IMR-90 (cell line): ENCODE measurements at regions of chr11 and their contacts with region 1.

Region 1: DNA sequence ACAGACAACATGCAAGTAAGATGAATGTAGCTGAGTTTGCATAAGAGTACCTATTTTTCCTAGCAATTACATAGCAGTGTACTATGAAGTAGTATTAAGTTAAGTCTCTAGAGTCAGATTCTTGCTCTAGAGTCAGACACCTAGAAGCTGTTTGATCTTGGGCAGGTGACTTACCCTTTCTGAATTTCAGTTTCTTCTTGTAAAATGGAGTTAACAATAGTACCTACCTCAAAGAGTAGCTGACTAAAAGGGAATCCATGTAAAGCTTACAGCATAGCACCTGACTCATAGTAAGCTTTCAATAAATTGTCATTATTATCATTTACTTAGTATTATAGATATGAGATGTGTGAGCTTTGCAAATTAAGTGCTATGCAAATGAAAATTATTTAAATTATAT is 47.8 kb upstream of the PTPRJ start:
- DNase-seq: no peak
- ATAC-seq: no peak
- H3K4me3 ChIP-seq: no peak overlapping the region
- H3K27ac ChIP-seq: no peak overlapping the region
- H3K4me1 ChIP-seq: peaks cover 4% of the 10 kb centered on the region
- H3K27me3 ChIP-seq: no peaks in the 10 kb centered on the region
- CTCF ChIP-seq: no peak
- POLR2A ChIP-seq: no peak
- RAD21 ChIP-seq: no peak

Region 2: DNA sequence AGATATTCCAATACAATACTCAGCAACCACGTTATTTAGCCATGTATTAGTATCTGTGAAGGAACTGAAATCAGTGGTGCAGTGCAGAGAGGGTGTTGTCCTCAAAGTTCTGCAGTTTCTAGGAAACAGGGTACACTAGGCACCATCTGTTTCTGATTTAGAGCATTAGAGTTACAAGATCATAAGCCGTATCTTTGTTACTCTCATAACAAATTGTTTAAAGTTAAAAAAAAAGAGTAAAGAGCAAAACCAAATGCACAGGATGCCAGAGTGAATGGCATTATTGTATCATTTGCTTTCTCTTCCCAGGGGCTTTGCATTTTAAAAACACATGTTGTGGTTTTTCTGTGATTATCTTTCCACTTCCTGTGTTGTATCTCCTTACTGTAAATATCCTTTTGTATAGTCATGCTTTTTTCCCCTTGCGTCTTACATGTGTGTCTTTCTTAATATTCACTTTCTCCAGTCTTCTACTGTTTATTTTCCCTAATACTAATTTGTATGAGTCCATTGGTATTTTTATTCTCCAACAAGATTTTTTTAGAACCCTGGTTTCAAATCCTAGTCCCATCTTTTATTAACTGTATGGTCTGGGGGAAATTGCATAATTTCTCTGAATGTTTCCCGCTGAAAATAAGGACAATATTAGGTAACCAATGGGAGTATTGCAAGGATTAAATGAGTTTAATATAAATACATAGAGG is 69.2 kb before region 1 on chr11:
- CTCF ChIA-PET with region 1: interaction called, 3 read pairs
- POLR2A ChIA-PET with region 1: no interaction called
- dilution Hi-C with region 1: no loop called
- in situ Hi-C with region 1: no loop called
- intact Hi-C with region 1: loop called (anchors 5 kb)
- DNase-seq: peak; percentile 92
- ATAC-seq: peak; percentile 78
- H3K4me3 ChIP-seq: no peak overlapping the region
- H3K27ac ChIP-seq: peak overlapping the region; percentile 31; the same call in 1 of the 2 replicates
- H3K4me1 ChIP-seq: peaks cover 5% of the 10 kb centered on the region
- H3K27me3 ChIP-seq: no peaks in the 10 kb centered on the region
- CTCF ChIP-seq: no peak
- POLR2A ChIP-seq: no peak
- RAD21 ChIP-seq: no peak

Region 3: DNA sequence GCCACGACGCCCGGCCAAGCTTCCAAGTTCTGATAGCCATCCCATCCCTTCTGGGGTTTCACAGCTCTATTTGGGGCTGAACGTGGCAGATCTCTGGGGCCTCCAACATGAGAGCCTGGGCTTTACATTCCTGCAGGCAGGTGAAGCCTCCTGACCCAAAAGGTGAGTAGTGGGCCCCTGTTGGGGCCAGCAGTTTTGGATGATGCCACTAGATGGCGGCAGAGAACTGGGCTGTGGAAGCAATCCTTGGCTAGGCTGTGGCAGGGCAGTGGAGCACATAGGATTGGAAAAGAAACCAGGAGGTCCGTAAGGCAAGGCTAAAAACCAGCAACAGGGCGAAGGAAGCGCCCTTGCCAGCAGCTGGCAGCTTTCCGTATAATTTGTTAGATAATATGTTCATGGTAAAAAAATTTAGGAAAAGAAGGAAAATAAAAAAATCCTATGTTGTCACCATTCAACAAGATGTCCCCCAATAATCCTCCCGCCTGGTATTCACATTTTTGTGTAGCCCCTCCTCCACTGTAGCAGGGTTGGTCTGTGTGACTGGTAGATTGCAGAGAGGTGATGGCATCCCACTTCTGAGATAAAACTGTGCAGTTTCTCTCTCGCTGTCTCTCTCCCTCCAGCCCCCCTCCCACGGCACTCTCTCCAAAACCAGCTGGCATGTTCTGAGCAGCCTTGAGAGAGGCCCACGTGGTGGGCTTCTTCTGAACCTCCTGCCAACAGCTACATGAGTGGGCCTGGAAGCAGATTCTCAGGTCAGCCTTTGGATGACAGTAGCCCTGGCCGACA is 240.5 kb after region 1 on chr11:
- CTCF ChIA-PET with region 1: no interaction called
- POLR2A ChIA-PET with region 1: no interaction called
- dilution Hi-C with region 1: no loop called
- in situ Hi-C with region 1: no loop called
- intact Hi-C with region 1: loop called (anchors 2 kb)
- DNase-seq: peak; percentile 69
- ATAC-seq: peak; percentile 80
- H3K4me3 ChIP-seq: no peak overlapping the region
- H3K27ac ChIP-seq: no peak overlapping the region
- H3K4me1 ChIP-seq: peaks cover 12% of the 10 kb centered on the region
- H3K27me3 ChIP-seq: no peaks in the 10 kb centered on the region; the same call in 1 of the 2 replicates
- CTCF ChIP-seq: peak; percentile 90
- POLR2A ChIP-seq: no peak
- RAD21 ChIP-seq: peak; percentile 88

Region 4: DNA sequence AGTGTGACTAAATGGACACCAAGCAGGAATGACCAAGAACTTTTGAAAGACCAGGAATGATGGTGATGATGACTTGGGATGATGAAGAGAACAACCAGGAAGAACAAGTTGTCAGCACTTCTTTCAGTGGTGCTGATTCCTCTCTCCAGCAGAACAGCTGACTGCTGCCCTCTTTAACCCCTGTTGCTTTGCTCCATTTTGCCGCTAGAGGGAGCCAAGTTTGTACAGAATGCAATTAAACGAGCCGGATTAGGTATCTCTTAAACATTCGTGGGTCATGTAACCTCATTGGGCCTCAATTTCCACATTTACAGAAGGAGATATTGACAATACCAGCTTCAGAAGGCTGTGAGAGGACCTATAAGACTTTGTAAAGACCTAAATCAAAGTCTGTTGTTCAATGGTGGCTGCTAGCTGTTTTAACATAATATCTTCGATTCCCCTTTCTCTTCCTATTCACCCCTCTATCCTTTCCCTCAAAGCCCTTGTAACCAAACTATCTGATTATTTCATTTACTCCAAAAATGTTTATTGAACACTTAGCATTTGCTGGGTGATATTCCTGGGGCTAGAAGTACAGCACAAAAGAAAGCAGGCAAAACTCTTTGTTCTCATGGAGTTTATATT is 375.3 kb after region 1 on chr11:
- CTCF ChIA-PET with region 1: no interaction called
- POLR2A ChIA-PET with region 1: no interaction called
- dilution Hi-C with region 1: no loop called
- in situ Hi-C with region 1: no loop called
- intact Hi-C with region 1: loop called (anchors 10 kb)
- DNase-seq: peak; percentile 48
- ATAC-seq: peak; percentile 90
- H3K4me3 ChIP-seq: no peak overlapping the region
- H3K27ac ChIP-seq: no peak overlapping the region
- H3K4me1 ChIP-seq: no peaks in the 10 kb centered on the region
- H3K27me3 ChIP-seq: no peaks in the 10 kb centered on the region
- CTCF ChIP-seq: peak; percentile 79
- POLR2A ChIP-seq: no peak
- RAD21 ChIP-seq: peak; percentile 70